IMR-90 (cell line): ENCODE measurements at regions of chr5 and their contacts with region 1.

Region 1: GRCh38 chr5:41532485-41532884 is 22.1 kb upstream of the PLCXD3 start:
- DNase-seq: no peak
- ATAC-seq: no peak
- H3K4me3 ChIP-seq: no peak overlapping the region
- H3K27ac ChIP-seq: no peak overlapping the region
- H3K4me1 ChIP-seq: no peaks in the 10 kb centered on the region
- H3K27me3 ChIP-seq: no peaks in the 10 kb centered on the region
- CTCF ChIP-seq: no peak
- POLR2A ChIP-seq: no peak
- RAD21 ChIP-seq: no peak

Region 2: GRCh38 chr5:41686767-41687166 is 154.3 kb after region 1 on chr5:
- CTCF ChIA-PET with region 1: no interaction called
- POLR2A ChIA-PET with region 1: no interaction called
- dilution Hi-C with region 1: no loop called
- in situ Hi-C with region 1: no loop called
- intact Hi-C with region 1: loop called (anchors 5 kb)
- DNase-seq: no peak
- ATAC-seq: no peak
- H3K4me3 ChIP-seq: no peak overlapping the region
- H3K27ac ChIP-seq: no peak overlapping the region
- H3K4me1 ChIP-seq: no peaks in the 10 kb centered on the region
- H3K27me3 ChIP-seq: no peaks in the 10 kb centered on the region; the same call in none of the 2 replicates
- CTCF ChIP-seq: no peak
- POLR2A ChIP-seq: no peak
- RAD21 ChIP-seq: no peak